MCF 10A (cell line): ENCODE measurements at regions of chr2 and their contacts with region 1.

Region 1: GRCh38 chr2:195318440-195319111 is 338.4 kb upstream of the SLC39A10 start:
- DNase-seq: peak; percentile 70
- H3K4me3 Mint-ChIP-seq: peak overlapping the region; percentile 28
- H3K27ac Mint-ChIP-seq: peak overlapping the region; percentile 82
- H3K4me1 Mint-ChIP-seq: peaks cover 31% of the 10 kb centered on the region
- H3K27me3 Mint-ChIP-seq: no peaks in the 10 kb centered on the region
- CTCF ChIP-seq: peak; percentile 67

Region 2: GRCh38 chr2:193695367-193695766 is 1623.2 kb before region 1 on chr2:
- CTCF ChIA-PET with region 1: interaction called, 5 read pairs
- POLR2A ChIA-PET with region 1: no interaction called
- intact Hi-C with region 1: loop called (anchors 5 kb)
- DNase-seq: peak; percentile 57
- H3K4me3 Mint-ChIP-seq: no peak overlapping the region
- H3K27ac Mint-ChIP-seq: no peak overlapping the region
- H3K4me1 Mint-ChIP-seq: no peaks in the 10 kb centered on the region
- H3K27me3 Mint-ChIP-seq: no peaks in the 10 kb centered on the region
- CTCF ChIP-seq: peak; percentile 46

Region 3: DNA sequence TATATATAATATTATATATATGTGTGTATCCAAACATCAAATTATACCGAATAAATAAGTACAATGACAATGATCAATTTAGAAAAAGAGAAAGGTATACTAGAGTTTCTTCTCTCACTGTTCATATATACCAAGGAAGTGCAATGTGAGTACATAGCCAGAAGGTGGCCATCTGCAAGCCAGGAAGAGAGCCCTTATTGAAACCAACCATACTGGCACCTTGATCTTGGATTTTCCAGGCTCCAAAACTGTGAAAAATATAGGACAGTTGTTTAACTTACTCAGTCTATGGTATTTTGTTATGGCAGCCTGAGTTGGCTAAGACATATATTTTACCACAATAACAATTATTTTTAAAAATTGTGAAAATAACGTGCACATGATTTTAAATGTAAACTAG is 1151.8 kb before region 1 on chr2:
- CTCF ChIA-PET with region 1: no interaction called
- POLR2A ChIA-PET with region 1: no interaction called
- intact Hi-C with region 1: loop called (anchors 5 kb)
- DNase-seq: peak; percentile 46
- H3K4me3 Mint-ChIP-seq: no peak overlapping the region
- H3K27ac Mint-ChIP-seq: no peak overlapping the region
- H3K4me1 Mint-ChIP-seq: no peaks in the 10 kb centered on the region
- H3K27me3 Mint-ChIP-seq: no peaks in the 10 kb centered on the region
- CTCF ChIP-seq: peak; percentile 60

Region 4: GRCh38 chr2:194819344-194819743 is 499.2 kb before region 1 on chr2:
- CTCF ChIA-PET with region 1: no interaction called
- POLR2A ChIA-PET with region 1: no interaction called
- intact Hi-C with region 1: loop called (anchors 5 kb)
- DNase-seq: peak; percentile 50
- H3K4me3 Mint-ChIP-seq: no peak overlapping the region
- H3K27ac Mint-ChIP-seq: no peak overlapping the region
- H3K4me1 Mint-ChIP-seq: no peaks in the 10 kb centered on the region
- H3K27me3 Mint-ChIP-seq: no peaks in the 10 kb centered on the region
- CTCF ChIP-seq: peak; percentile 20

Region 5: GRCh38 chr2:195410074-195410671 is 91.6 kb after region 1 on chr2:
- CTCF ChIA-PET with region 1: interaction called, 4 read pairs
- POLR2A ChIA-PET with region 1: interaction called, 3 read pairs
- intact Hi-C with region 1: loop called (anchors 5 kb)
- DNase-seq: no peak
- H3K4me3 Mint-ChIP-seq: no peak overlapping the region
- H3K27ac Mint-ChIP-seq: no peak overlapping the region
- H3K4me1 Mint-ChIP-seq: peaks cover 14% of the 10 kb centered on the region
- H3K27me3 Mint-ChIP-seq: no peaks in the 10 kb centered on the region
- CTCF ChIP-seq: no peak

Region 6: GRCh38 chr2:195575879-195576401 is 257.4 kb after region 1 on chr2:
- CTCF ChIA-PET with region 1: no interaction called
- POLR2A ChIA-PET with region 1: interaction called, 3 read pairs
- intact Hi-C with region 1: loop called (anchors 5 kb)
- DNase-seq: peak; percentile 85
- H3K4me3 Mint-ChIP-seq: peak overlapping the region; percentile 36
- H3K27ac Mint-ChIP-seq: peak overlapping the region; percentile 79
- H3K4me1 Mint-ChIP-seq: peaks cover 22% of the 10 kb centered on the region
- H3K27me3 Mint-ChIP-seq: no peaks in the 10 kb centered on the region
- CTCF ChIP-seq: no peak

Region 7: DNA sequence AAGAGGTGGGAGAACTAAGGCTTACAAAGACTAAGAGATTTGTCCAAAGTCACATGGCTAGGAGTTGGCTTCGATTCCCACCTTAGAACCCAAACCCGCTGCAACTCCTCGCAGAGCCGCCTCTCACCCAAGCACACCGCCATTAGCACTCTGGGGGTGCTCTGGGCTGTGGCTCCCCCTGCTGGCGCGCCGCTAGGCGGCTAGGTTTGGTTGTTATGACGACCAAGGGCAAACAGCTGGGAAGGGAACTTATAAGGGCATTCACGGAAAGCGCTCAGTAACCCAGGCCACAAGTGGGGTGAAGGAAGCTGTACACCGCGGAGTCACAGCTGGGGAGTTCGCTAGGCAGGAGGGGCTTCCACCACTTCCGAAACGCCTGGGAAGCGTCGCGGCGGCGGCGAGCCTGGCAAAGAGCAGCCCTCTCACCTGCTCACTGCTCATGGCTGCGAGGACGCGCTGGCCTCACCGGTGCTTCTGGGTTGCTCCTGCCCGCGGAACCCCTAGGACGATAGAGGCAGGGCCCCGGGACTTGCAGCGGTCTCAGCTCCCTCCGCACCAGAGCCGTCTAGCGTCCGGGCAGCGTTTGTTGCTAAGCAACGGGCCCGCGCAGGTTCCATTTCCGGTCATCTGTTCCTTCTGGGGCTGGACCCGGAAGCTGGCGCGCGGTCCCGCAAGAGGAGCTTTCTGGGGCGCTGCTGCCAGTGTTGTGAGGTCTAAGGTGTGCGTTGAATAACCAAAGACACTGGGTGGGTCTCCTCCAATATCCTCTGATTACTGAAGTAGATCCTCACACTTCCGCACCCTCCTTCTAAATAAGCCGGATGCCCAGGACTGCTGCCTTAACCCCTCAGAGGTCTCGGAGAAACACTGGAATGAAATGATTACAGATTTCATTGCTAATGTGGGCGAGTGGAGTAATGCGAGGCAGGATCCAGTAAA is 750.0 kb after region 1 on chr2 and contains the start of gene DNAH7:
- CTCF ChIA-PET with region 1: interaction called, 3 read pairs
- POLR2A ChIA-PET with region 1: no interaction called
- intact Hi-C with region 1: loop called (anchors 2 kb)
- DNase-seq: peak; percentile 82
- H3K4me3 Mint-ChIP-seq: peak within 1 kb of the TSS; percentile 93
- H3K27ac Mint-ChIP-seq: peak within 1 kb of the TSS; percentile 99
- H3K4me1 Mint-ChIP-seq: peaks cover 5% of the 10 kb centered on the region
- H3K27me3 Mint-ChIP-seq: no peaks in the 10 kb centered on the region
- CTCF ChIP-seq: peak; percentile 54
- total RNA-seq, gene DNAH7: 0.91 and 0.98 TPM in 2 replicates